CD4-positive, alpha-beta T cell (primary cell): ENCODE measurements at regions of chr12 and their contacts with region 1.

Region 1: GRCh38 chr12:22046090-22046967 is at the start of gene CMAS:
- DNase-seq: peak; percentile 62 to 89 (median 77)
- ATAC-seq: peak; percentile 89
- H3K4me3 ChIP-seq: peak within 1 kb of the TSS; percentile 85
- H3K4me3 Mint-ChIP-seq: peak within 1 kb of the TSS; percentile 97
- H3K27ac ChIP-seq: peak within 1 kb of the TSS; percentile 29 to 43
- H3K27ac Mint-ChIP-seq: peak within 1 kb of the TSS; percentile 89
- H3K4me1 ChIP-seq: peaks cover 7% of the 10 kb centered on the region
- H3K4me1 Mint-ChIP-seq: peaks cover 54% of the 10 kb centered on the region
- H3K27me3 ChIP-seq: no peaks in the 10 kb centered on the region
- H3K27me3 Mint-ChIP-seq: no peaks in the 10 kb centered on the region
- CTCF ChIP-seq: no peak
- total RNA-seq, gene CMAS: 5.5 to 7.0 TPM

Region 2: DNA sequence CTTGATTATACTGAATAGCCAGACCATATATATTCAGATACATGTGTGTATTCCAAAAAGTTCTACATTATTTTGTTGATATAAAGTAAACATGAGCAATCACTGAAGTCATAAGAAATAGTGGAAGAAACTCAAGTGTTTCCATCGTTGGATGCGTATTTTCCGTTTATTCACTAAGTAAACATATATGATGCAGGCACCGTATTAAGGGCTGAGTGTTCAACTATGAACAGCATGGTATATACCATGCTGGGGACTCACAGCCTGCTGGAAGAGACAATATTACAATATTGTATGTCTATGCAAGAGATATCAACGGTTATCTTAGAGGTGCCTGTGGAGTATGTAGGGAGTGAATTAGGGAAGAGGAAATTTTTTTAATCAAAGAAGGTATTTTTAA is 607.7 kb before region 1 on chr12:
- CTCF ChIA-PET with region 1: no interaction called
- POLR2A ChIA-PET with region 1: interaction called, 3 read pairs
- intact Hi-C with region 1: loop called in 1 of 2 experiments (anchors 5 kb)
- DNase-seq: peak in 1 of 14 experiments; percentile 16
- ATAC-seq: no peak
- H3K4me3 ChIP-seq: peak overlapping the region; percentile 89
- H3K4me3 Mint-ChIP-seq: peak overlapping the region; percentile 99
- H3K27ac ChIP-seq: peak overlapping the region in 1 of 2 donors; percentile 12
- H3K27ac Mint-ChIP-seq: peak overlapping the region; percentile 97
- H3K4me1 ChIP-seq: peaks cover 19% of the 10 kb centered on the region
- H3K4me1 Mint-ChIP-seq: peaks cover 55% of the 10 kb centered on the region
- H3K27me3 ChIP-seq: no peaks in the 10 kb centered on the region
- H3K27me3 Mint-ChIP-seq: no peaks in the 10 kb centered on the region
- CTCF ChIP-seq: no peak

Region 3: DNA sequence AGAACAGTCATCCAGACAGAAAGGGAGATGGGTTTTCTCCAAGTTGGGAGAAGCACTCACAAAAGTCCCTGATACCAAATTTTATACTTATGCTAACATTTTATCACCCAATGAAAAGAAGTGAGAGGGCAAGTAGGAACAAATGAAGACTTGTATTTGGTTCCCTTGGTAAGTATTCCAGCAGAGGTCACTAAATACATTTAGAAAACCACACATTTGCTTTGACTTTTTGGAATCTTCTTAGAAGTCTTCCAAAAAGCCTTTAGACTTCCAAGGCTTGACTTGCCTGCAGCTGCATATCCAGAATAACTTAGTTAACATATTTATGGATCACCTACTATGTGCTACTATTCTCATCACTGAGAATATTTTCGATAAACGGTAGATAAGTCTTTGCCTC is 438.6 kb before region 1 on chr12:
- CTCF ChIA-PET with region 1: no interaction called
- POLR2A ChIA-PET with region 1: no interaction called
- intact Hi-C with region 1: loop called in 1 of 2 experiments (anchors 10 kb)
- DNase-seq: peak in 3 of 14 experiments; percentile 54 to 60 (median 59)
- ATAC-seq: peak; percentile 58
- H3K4me3 ChIP-seq: no peak overlapping the region
- H3K4me3 Mint-ChIP-seq: no peak overlapping the region
- H3K27ac ChIP-seq: no peak overlapping the region
- H3K27ac Mint-ChIP-seq: no peak overlapping the region
- H3K4me1 ChIP-seq: peaks cover 3% of the 10 kb centered on the region
- H3K4me1 Mint-ChIP-seq: peaks cover 7% of the 10 kb centered on the region
- H3K27me3 ChIP-seq: no peaks in the 10 kb centered on the region
- H3K27me3 Mint-ChIP-seq: no peaks in the 10 kb centered on the region
- CTCF ChIP-seq: peak; percentile 76

Region 4: GRCh38 chr12:22467190-22467589 is 420.9 kb after region 1 on chr12:
- CTCF ChIA-PET with region 1: no interaction called
- POLR2A ChIA-PET with region 1: no interaction called
- intact Hi-C with region 1: no loop called
- DNase-seq: no peak
- ATAC-seq: no peak
- H3K4me3 ChIP-seq: no peak overlapping the region
- H3K4me3 Mint-ChIP-seq: no peak overlapping the region
- H3K27ac ChIP-seq: no peak overlapping the region
- H3K27ac Mint-ChIP-seq: no peak overlapping the region
- H3K4me1 ChIP-seq: no peaks in the 10 kb centered on the region
- H3K4me1 Mint-ChIP-seq: no peaks in the 10 kb centered on the region
- H3K27me3 ChIP-seq: no peaks in the 10 kb centered on the region
- H3K27me3 Mint-ChIP-seq: no peaks in the 10 kb centered on the region
- CTCF ChIP-seq: no peak

Region 5: GRCh38 chr12:22544038-22544979 is 498.0 kb after region 1 on chr12 and contains the start of gene C2CD5:
- CTCF ChIA-PET with region 1: no interaction called
- POLR2A ChIA-PET with region 1: interaction called, 4 read pairs
- intact Hi-C with region 1: loop called in 1 of 2 experiments (anchors 5 kb)
- DNase-seq: peak; percentile 90 to 98 (median 94)
- ATAC-seq: peak; percentile 89
- H3K4me3 ChIP-seq: peak within 1 kb of the TSS; percentile 82
- H3K4me3 Mint-ChIP-seq: peak within 1 kb of the TSS; percentile 95
- H3K27ac ChIP-seq: peak within 1 kb of the TSS; percentile 81 to 88
- H3K27ac Mint-ChIP-seq: peak within 1 kb of the TSS; percentile 97
- H3K4me1 ChIP-seq: peaks cover 31% of the 10 kb centered on the region
- H3K4me1 Mint-ChIP-seq: peaks cover 44% of the 10 kb centered on the region
- H3K27me3 ChIP-seq: no peaks in the 10 kb centered on the region
- H3K27me3 Mint-ChIP-seq: peaks cover 6% of the 10 kb centered on the region
- CTCF ChIP-seq: peak; percentile 37
- total RNA-seq, gene C2CD5: 21.8 to 23.2 TPM

Region 6: DNA sequence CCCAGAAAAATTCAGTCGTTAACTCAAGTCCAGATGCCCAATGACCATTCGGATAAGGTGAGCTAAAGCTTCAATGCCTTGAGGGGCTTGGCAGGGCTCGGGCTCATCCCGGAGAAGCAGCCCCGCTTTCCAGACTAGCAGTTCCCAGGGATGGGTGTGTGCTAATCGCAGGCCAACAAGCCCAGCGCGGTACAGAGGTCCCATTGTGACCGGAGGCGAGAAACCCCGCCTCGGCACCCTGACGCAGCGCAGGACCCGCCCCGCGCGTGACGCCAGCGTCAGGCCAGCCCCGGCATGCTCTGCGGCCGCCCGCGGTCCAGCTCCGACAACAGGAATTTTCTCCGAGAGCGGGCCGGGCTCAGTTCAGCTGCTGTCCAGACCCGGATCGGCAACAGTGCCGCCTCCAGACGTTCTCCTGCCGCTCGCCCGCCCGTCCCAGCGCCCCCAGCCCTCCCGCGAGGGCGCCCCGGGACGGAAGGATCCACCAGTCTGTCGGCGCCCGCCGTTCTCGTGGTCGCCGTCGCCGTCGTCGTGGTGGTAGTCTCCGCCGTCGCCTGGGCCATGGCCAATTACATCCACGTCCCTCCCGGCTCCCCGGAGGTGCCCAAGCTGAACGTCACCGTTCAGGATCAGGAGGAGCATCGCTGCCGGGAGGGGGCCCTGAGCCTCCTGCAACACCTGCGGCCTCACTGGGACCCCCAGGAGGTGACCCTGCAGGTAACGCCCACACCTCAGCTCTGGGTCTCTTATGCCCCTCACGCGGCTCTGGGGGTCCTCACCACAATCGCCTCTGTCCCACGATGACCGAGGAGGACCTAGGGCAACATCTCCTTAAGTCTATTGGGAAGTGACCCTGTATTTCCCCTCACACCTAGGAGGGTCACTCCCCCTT is 578.8 kb after region 1 on chr12 and contains the start of gene ETNK1:
- CTCF ChIA-PET with region 1: no interaction called
- POLR2A ChIA-PET with region 1: no interaction called
- intact Hi-C with region 1: loop called in 1 of 2 experiments (anchors 5 kb)
- DNase-seq: peak; percentile 64 to 91 (median 77)
- ATAC-seq: peak; percentile 91
- H3K4me3 ChIP-seq: peak within 1 kb of the TSS; percentile 96
- H3K4me3 Mint-ChIP-seq: peak within 1 kb of the TSS; percentile 92
- H3K27ac ChIP-seq: peak within 1 kb of the TSS; percentile 79 to 81
- H3K27ac Mint-ChIP-seq: peak within 1 kb of the TSS; percentile 90
- H3K4me1 ChIP-seq: peaks cover 7% of the 10 kb centered on the region
- H3K4me1 Mint-ChIP-seq: peaks cover 46% of the 10 kb centered on the region
- H3K27me3 ChIP-seq: no peaks in the 10 kb centered on the region
- H3K27me3 Mint-ChIP-seq: no peaks in the 10 kb centered on the region
- CTCF ChIP-seq: no peak
- total RNA-seq, gene ETNK1: 24.3 to 26.4 TPM